CD4-positive, alpha-beta T cell (primary cell): ENCODE measurements at regions of chr6 and their contacts with region 1.

Region 1: DNA sequence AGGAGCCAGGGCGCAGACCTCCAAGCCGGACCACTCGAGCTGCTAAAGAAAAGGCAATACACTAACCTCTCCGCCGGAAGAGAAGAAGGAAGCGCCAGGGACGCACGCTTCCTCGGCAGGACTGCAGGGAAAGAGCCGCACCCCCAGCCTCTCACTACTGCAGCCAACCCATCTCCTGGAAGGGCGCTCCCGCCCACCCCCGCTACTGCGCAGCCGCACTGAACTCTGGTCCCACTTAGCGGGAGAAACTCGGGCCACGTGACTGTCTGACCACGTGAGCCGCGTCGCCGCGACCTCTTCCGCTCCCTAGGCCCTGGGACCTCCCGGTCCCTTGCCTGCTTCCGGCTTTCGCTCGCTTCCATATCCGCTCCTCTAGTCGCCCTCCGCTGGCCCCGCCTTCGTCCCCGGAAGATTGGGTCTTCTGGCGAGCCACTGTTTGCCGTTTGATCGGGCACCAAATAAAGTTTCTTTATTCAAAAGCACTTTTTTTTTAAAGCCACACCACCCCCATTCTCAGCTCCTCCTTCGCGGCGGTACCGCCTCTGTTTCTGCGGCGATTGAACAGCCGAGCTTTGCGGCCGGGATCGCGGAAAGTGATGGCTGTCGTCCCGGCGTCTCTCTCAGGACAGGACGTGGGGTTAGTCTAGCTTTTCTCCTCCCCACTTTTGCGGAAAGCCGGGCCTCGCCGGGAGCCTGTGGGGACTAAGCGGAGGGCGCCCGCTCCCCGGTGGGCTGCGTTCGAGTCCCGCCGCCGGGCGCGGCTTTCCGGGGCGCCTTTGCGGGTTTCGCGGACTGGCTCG is at the start of gene RMND1:
- DNase-seq: peak; percentile 96 to 100 (median 99)
- ATAC-seq: peak; percentile 95
- H3K4me3 ChIP-seq: peak within 1 kb of the TSS; percentile 76
- H3K4me3 Mint-ChIP-seq: peak within 1 kb of the TSS; percentile 91
- H3K27ac ChIP-seq: peak within 1 kb of the TSS; percentile 52 to 85
- H3K27ac Mint-ChIP-seq: peak within 1 kb of the TSS; percentile 80
- H3K4me1 ChIP-seq: peaks cover 13% of the 10 kb centered on the region
- H3K4me1 Mint-ChIP-seq: peaks cover 65% of the 10 kb centered on the region
- H3K27me3 ChIP-seq: no peaks in the 10 kb centered on the region
- H3K27me3 Mint-ChIP-seq: no peaks in the 10 kb centered on the region
- CTCF ChIP-seq: no peak
- total RNA-seq, gene RMND1: 6.5 to 7.5 TPM

Region 2: GRCh38 chr6:150865406-150866146 is 586.6 kb before region 1 on chr6 and contains the start of gene MTHFD1L:
- CTCF ChIA-PET with region 1: no interaction called
- POLR2A ChIA-PET with region 1: no interaction called
- intact Hi-C with region 1: loop called in 1 of 2 experiments (anchors 10 kb)
- DNase-seq: peak; percentile 43 to 86 (median 60)
- ATAC-seq: peak; percentile 57
- H3K4me3 ChIP-seq: peak within 1 kb of the TSS; percentile 62
- H3K4me3 Mint-ChIP-seq: peak within 1 kb of the TSS; percentile 89
- H3K27ac ChIP-seq: peak within 1 kb of the TSS in 1 of 2 donors; percentile 40
- H3K27ac Mint-ChIP-seq: peak within 1 kb of the TSS; percentile 80
- H3K4me1 ChIP-seq: peaks cover 17% of the 10 kb centered on the region
- H3K4me1 Mint-ChIP-seq: peaks cover 14% of the 10 kb centered on the region
- H3K27me3 ChIP-seq: no peaks in the 10 kb centered on the region
- H3K27me3 Mint-ChIP-seq: no peaks in the 10 kb centered on the region
- CTCF ChIP-seq: peak; percentile 57
- total RNA-seq, gene MTHFD1L: 8.8 to 9.7 TPM

Region 3: DNA sequence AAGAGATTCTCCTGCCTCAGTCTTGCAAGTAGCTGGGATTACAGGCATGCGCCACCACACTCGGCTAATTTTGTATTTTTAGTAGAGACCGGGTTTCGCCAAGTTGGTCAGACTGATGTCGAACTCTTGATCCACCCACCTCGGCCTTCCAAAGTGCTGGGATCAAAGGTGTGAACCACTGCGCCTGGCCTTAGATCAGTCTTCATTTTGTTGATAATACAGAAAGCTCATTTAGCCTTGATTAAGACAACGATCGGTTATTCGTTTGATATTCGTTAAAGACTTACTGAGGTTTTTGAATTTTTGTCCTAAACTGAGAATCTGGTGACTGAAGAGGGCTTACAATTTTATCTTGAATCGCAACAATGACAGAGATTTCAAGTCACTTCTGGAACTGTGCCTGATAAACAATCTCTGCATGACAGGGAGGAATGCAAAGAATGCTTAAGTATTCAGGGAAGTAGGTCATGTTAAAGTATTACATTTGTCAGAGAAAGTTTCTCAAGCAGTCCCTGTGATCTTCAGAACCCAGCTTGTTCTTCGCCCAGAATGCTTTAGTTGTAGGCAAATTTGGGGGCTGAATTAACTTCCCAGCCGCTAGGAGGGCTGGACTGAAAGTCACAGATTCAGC is 197.6 kb before region 1 on chr6:
- CTCF ChIA-PET with region 1: no interaction called
- POLR2A ChIA-PET with region 1: no interaction called
- intact Hi-C with region 1: no loop called
- DNase-seq: no peak
- ATAC-seq: no peak
- H3K4me3 ChIP-seq: no peak overlapping the region
- H3K4me3 Mint-ChIP-seq: no peak overlapping the region
- H3K27ac ChIP-seq: no peak overlapping the region
- H3K27ac Mint-ChIP-seq: no peak overlapping the region
- H3K4me1 ChIP-seq: no peaks in the 10 kb centered on the region
- H3K4me1 Mint-ChIP-seq: no peaks in the 10 kb centered on the region
- H3K27me3 ChIP-seq: no peaks in the 10 kb centered on the region
- H3K27me3 Mint-ChIP-seq: peaks cover 17% of the 10 kb centered on the region
- CTCF ChIP-seq: no peak

Region 4: GRCh38 chr6:151409260-151409659 is 42.9 kb before region 1 on chr6:
- CTCF ChIA-PET with region 1: interaction called, 3 read pairs
- POLR2A ChIA-PET with region 1: interaction called, 18 read pairs
- intact Hi-C with region 1: loop called (anchors 5 kb)
- DNase-seq: no peak
- ATAC-seq: no peak
- H3K4me3 ChIP-seq: no peak overlapping the region
- H3K4me3 Mint-ChIP-seq: no peak overlapping the region
- H3K27ac ChIP-seq: no peak overlapping the region
- H3K27ac Mint-ChIP-seq: peak overlapping the region; percentile 4
- H3K4me1 ChIP-seq: peaks cover 15% of the 10 kb centered on the region
- H3K4me1 Mint-ChIP-seq: peaks cover 44% of the 10 kb centered on the region
- H3K27me3 ChIP-seq: no peaks in the 10 kb centered on the region
- H3K27me3 Mint-ChIP-seq: no peaks in the 10 kb centered on the region
- CTCF ChIP-seq: no peak

Region 5: DNA sequence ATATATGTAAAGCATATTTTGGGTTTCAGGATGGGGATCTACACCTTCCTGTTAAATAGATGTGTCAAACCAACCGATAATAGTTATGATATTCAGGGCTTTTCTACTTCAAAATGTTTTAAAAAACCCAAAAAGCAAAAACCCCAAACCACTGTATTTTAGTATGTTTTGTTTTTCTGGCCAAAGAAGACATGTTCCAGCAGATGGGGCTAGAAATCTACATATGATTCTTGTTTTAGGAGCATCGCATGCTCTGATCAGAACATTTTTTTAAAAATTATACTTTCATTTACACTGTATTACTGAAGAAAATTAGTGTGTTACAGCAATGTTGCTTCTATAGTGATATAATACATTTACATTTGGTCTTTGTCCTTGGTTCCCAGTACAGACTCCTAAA is 11.2 kb before region 1 on chr6:
- CTCF ChIA-PET with region 1: interaction called, 3 read pairs
- POLR2A ChIA-PET with region 1: interaction called, 11 read pairs
- intact Hi-C with region 1: no loop called
- DNase-seq: peak in 3 of 14 experiments; percentile 46 to 67 (median 66)
- ATAC-seq: peak; percentile 66
- H3K4me3 ChIP-seq: no peak overlapping the region
- H3K4me3 Mint-ChIP-seq: no peak overlapping the region
- H3K27ac ChIP-seq: no peak overlapping the region
- H3K27ac Mint-ChIP-seq: no peak overlapping the region
- H3K4me1 ChIP-seq: peaks cover 6% of the 10 kb centered on the region
- H3K4me1 Mint-ChIP-seq: peaks cover 52% of the 10 kb centered on the region
- H3K27me3 ChIP-seq: no peaks in the 10 kb centered on the region
- H3K27me3 Mint-ChIP-seq: no peaks in the 10 kb centered on the region
- CTCF ChIP-seq: peak; percentile 65

Region 6: DNA sequence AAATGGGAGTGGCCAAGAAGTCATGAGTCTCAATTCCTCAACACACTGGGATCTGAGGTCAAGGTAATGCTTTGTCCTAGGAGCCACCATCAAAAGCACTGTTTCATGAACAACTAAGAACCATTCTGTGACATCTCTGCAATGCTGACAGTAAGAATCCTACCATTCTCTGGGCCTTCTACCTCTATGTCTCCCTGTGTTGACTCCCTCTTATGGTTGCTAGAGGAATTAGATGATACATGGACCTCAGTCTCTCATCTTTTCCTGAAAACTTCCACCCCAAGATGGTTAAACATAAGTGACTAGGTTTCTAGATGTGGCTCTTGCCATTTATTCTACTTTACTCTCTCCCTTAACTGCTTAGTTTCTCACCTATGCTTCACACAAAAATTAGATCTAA is 1541.3 kb after region 1 on chr6:
- CTCF ChIA-PET with region 1: no interaction called
- POLR2A ChIA-PET with region 1: no interaction called
- intact Hi-C with region 1: loop called in 1 of 2 experiments (anchors 10 kb)
- DNase-seq: peak in 1 of 14 experiments; percentile 10
- ATAC-seq: no peak
- H3K4me3 ChIP-seq: no peak overlapping the region
- H3K4me3 Mint-ChIP-seq: no peak overlapping the region
- H3K27ac ChIP-seq: peak overlapping the region in 1 of 2 donors; percentile 7
- H3K27ac Mint-ChIP-seq: peak overlapping the region; percentile 80
- H3K4me1 ChIP-seq: no peaks in the 10 kb centered on the region
- H3K4me1 Mint-ChIP-seq: peaks cover 56% of the 10 kb centered on the region
- H3K27me3 ChIP-seq: no peaks in the 10 kb centered on the region
- H3K27me3 Mint-ChIP-seq: no peaks in the 10 kb centered on the region
- CTCF ChIP-seq: no peak